ENCODE measurements at regions of chr11 and their contacts with region 1.

Region 1: GRCh38 chr11:64341851-64342791 is 2.1 kb downstream of the CCDC88B start:
- DNase-seq: peak; percentile 81 to 87 (median 85)
- H3K4me3 ChIP-seq: peak overlapping the region; percentile 15
- H3K4me3 Mint-ChIP-seq: peak overlapping the region in 6 of 7 donors; percentile 27 to 87 (median 58)
- H3K27ac ChIP-seq: peak overlapping the region; percentile 54
- H3K27ac Mint-ChIP-seq: peak overlapping the region in 5 of 8 donors; percentile 23 to 79 (median 74)
- H3K4me1 ChIP-seq: peaks cover 32% of the 10 kb centered on the region
- H3K4me1 Mint-ChIP-seq: peaks cover 34 to 59% (median 37%) of the 10 kb centered on the region in 3 donors
- H3K27me3 ChIP-seq: no peaks in the 10 kb centered on the region
- H3K27me3 Mint-ChIP-seq: peaks cover 0 to 2% of the 10 kb centered on the region in 2 donors

Region 2: GRCh38 chr11:63768237-63769043 is 573.7 kb before region 1 on chr11 and contains the start of gene ZFTA:
- CTCF ChIA-PET with region 1: no interaction called
- POLR2A ChIA-PET with region 1: interaction called, 15 read pairs
- DNase-seq: peak; percentile 50 to 76 (median 63)
- H3K4me3 ChIP-seq: peak within 1 kb of the TSS; percentile 76
- H3K4me3 Mint-ChIP-seq: peak within 1 kb of the TSS; percentile 87 to 99 (median 95)
- H3K27ac ChIP-seq: peak within 1 kb of the TSS; percentile 64
- H3K27ac Mint-ChIP-seq: peak within 1 kb of the TSS in 7 of 8 donors; percentile 23 to 91 (median 83)
- H3K4me1 ChIP-seq: peaks cover 8% of the 10 kb centered on the region
- H3K4me1 Mint-ChIP-seq: peaks cover 8 to 17% (median 9%) of the 10 kb centered on the region in 3 donors
- H3K27me3 ChIP-seq: no peaks in the 10 kb centered on the region
- H3K27me3 Mint-ChIP-seq: peaks cover 4 to 9% of the 10 kb centered on the region in 2 donors
- total RNA-seq, gene ZFTA: 7.0 to 7.6 TPM

Region 3: DNA sequence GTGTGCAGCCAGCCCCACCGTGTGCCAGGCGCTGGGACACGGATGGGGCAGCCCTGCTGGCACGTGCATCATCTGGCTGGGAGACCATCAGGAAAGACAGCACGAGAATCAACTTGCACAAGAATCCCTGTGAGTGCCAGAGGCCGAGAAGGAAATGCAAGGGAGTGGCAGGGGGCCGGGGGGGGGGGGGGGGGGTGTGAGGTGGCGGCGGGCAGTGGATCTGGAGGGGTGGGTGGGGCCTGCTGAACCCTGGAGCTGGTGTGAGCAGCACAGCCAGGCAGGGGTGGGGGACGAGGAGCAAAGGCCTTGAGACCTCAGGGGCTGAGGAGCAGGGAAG is 320.4 kb before region 1 on chr11:
- CTCF ChIA-PET with region 1: no interaction called
- POLR2A ChIA-PET with region 1: no interaction called
- DNase-seq: no peak
- H3K4me3 ChIP-seq: no peak overlapping the region
- H3K4me3 Mint-ChIP-seq: no peak overlapping the region
- H3K27ac ChIP-seq: no peak overlapping the region
- H3K27ac Mint-ChIP-seq: no peak overlapping the region
- H3K4me1 ChIP-seq: no peaks in the 10 kb centered on the region
- H3K4me1 Mint-ChIP-seq: no peaks in the 10 kb centered on the region
- H3K27me3 ChIP-seq: no peaks in the 10 kb centered on the region
- H3K27me3 Mint-ChIP-seq: no peaks in the 10 kb centered on the region

Region 4: DNA sequence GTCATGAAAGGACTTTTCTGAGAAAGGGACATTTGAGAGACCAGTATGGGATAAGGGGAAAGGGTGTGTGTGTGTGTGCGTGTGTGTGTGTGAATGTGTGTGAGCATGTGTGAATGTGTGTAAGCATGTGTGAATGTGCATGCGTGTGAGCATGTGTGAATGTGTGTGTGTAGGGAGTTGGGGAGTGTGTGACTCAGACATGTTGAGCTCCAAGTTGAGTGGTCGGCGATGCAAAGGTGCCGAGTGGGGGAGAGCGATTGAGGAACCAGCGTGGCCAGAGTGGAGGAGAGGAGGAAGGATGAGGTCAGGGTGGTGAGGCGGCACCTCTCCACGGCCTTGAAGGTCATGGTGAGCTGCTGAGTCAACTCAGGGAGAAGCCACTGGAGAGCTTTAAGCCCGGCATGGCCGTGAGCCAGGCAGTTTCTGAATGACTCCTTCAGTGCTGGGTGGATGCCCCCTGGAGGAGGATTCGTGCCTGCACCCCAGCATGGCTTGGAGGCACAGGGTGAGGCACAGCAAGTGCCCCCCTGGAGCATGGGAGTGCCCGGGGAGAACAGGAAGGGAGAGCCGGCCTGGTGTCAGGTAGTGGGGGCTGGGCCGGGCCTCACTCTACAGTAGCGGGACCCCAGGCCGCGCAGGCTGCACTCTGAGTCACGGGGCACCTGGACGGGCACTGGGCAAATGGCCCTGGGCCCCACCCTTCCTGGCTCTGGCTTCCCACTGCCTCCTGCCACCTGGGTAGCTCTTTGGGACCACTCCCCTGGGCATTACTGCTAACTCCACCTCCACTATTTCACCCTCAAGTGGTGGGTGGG is 10.4 kb before region 1 on chr11:
- CTCF ChIA-PET with region 1: interaction called, 10 read pairs
- POLR2A ChIA-PET with region 1: interaction called, 3 read pairs
- DNase-seq: peak; percentile 55 to 82 (median 60)
- H3K4me3 ChIP-seq: no peak overlapping the region
- H3K4me3 Mint-ChIP-seq: peak overlapping the region in 6 of 7 donors; percentile 14 to 70 (median 59)
- H3K27ac ChIP-seq: peak overlapping the region; percentile 38
- H3K27ac Mint-ChIP-seq: peak overlapping the region; percentile 0 to 94 (median 71)
- H3K4me1 ChIP-seq: peaks cover 12% of the 10 kb centered on the region
- H3K4me1 Mint-ChIP-seq: peaks cover 7 to 13% (median 9%) of the 10 kb centered on the region in 3 donors
- H3K27me3 ChIP-seq: no peaks in the 10 kb centered on the region
- H3K27me3 Mint-ChIP-seq: no peaks in the 10 kb centered on the region

Measured in CD8-positive, alpha-beta memory T cell (primary cell).